Psoas muscle (tissue), 8 donors: ENCODE measurements at regions of chr11 and their contacts with region 1.

Region 1: GRCh38 chr11:18731949-18732821 is 6.2 kb upstream of the IGSF22 start:
- DNase-seq: peak in 1 of 2 donors; percentile 58
- ATAC-seq: peak; percentile 56 to 77 (median 62)
- H3K4me3 ChIP-seq: no peak overlapping the region
- H3K27ac ChIP-seq: no peak overlapping the region
- H3K4me1 ChIP-seq: no peaks in the 10 kb centered on the region
- H3K27me3 ChIP-seq: no peaks in the 10 kb centered on the region
- CTCF ChIP-seq: peak; percentile 95

Region 2: GRCh38 chr11:18115360-18116127 is 616.6 kb before region 1 on chr11:
- intact Hi-C with region 1: loop called in 1 of 2 experiments (anchors 10 kb)
- DNase-seq: no peak
- ATAC-seq: peak; percentile 61 to 87 (median 84)
- H3K4me3 ChIP-seq: no peak overlapping the region
- H3K27ac ChIP-seq: no peak overlapping the region
- H3K4me1 ChIP-seq: no peaks in the 10 kb centered on the region
- H3K27me3 ChIP-seq: peaks cover 0 to 8% (median 0%) of the 10 kb centered on the region in 3 donors
- CTCF ChIP-seq: peak; percentile 83

Region 3: GRCh38 chr11:18540207-18541009 is 191.8 kb before region 1 on chr11:
- intact Hi-C with region 1: loop called in 1 of 2 experiments (anchors 5 kb)
- DNase-seq: no peak
- ATAC-seq: no peak
- H3K4me3 ChIP-seq: no peak overlapping the region
- H3K27ac ChIP-seq: no peak overlapping the region
- H3K4me1 ChIP-seq: no peaks in the 10 kb centered on the region
- H3K27me3 ChIP-seq: no peaks in the 10 kb centered on the region
- CTCF ChIP-seq: peak; percentile 35